GM10248 (cell line): ENCODE measurements at regions of chr5 and their contacts with region 1.

Region 1: GRCh38 chr5:89374144-89374784 is 491.3 kb upstream of the MEF2C start:
- DNase-seq: no peak
- CTCF ChIP-seq: no peak

Region 2: GRCh38 chr5:89353837-89354551 is 20.3 kb before region 1 on chr5:
- CTCF ChIA-PET with region 1: interaction called, 11 read pairs
- POLR2A ChIA-PET with region 1: no interaction called
- DNase-seq: peak; percentile 13
- CTCF ChIP-seq: no peak

Region 3: DNA sequence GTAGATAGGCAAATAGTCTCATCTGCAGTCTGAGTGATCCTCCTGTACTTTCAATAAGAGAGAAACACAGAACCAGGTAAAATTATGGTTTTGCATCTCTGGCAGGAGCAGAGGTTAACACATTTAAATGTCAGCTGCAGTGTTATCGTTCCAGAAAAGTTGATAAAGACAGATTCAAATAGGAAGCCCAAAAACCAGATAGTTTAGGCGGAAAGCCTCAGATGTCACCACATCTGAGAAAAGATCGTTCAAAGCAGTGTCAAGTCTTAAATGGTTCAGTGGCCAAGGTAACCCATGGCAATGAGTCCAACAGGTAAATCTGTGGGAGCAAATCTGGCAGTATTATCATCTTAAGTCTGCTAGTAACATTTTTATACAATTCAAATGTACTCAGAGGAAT is 50.8 kb after region 1 on chr5:
- CTCF ChIA-PET with region 1: no interaction called
- POLR2A ChIA-PET with region 1: no interaction called
- DNase-seq: no peak
- CTCF ChIP-seq: no peak